WTC11 (cell line): ENCODE measurements at regions of chr15 and their contacts with region 1.

Region 1: DNA sequence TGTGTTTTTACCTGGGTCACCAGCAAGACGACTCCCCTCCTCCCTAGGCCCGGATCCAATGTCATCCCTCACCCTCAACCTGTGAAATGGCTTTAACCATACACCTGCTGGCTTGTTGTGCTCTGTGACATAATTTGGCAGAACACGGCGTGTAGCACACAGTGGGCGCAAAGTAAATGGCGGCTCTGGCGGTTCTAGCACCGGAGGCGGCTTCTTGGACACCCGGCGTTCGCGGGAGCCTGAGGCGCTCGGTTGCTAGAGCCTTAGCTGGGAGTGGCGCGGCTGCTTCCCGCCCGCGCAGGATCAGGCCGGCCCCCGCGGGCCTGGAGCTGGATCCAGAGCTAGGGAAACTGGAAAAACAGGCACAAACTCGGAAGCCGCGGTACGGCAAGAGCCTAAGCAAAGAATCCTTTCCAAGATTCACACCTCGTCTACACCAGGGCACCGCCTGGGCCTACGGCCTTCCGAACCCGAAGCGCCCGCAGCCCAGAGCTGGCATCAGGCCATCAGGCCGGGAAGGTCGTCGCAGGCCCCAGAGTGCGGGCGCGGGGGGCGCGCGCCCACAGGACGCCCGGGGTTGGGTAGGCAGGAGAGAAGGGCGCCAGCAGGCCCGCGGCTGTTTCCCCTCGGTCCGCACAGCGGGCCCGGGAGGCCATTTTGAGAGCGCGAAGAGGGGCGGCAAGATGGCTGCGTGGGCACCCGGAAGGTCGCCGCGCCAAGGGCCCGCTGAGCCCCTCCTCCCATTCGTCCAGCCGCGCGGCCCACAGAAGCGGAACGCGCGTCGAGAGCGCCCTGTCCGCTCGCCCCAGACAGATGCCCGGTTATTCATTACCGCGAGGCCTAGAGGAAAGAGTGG is 43.9 kb upstream of the POLG start:
- DNase-seq: no peak
- ATAC-seq: peak; percentile 45
- H3K4me3 Mint-ChIP-seq: peak overlapping the region; percentile 62
- H3K27ac Mint-ChIP-seq: no peak overlapping the region
- H3K4me1 Mint-ChIP-seq: peaks cover 46% of the 10 kb centered on the region
- H3K27me3 Mint-ChIP-seq: peaks cover 100% of the 10 kb centered on the region
- CTCF ChIP-seq: no peak

Region 2: DNA sequence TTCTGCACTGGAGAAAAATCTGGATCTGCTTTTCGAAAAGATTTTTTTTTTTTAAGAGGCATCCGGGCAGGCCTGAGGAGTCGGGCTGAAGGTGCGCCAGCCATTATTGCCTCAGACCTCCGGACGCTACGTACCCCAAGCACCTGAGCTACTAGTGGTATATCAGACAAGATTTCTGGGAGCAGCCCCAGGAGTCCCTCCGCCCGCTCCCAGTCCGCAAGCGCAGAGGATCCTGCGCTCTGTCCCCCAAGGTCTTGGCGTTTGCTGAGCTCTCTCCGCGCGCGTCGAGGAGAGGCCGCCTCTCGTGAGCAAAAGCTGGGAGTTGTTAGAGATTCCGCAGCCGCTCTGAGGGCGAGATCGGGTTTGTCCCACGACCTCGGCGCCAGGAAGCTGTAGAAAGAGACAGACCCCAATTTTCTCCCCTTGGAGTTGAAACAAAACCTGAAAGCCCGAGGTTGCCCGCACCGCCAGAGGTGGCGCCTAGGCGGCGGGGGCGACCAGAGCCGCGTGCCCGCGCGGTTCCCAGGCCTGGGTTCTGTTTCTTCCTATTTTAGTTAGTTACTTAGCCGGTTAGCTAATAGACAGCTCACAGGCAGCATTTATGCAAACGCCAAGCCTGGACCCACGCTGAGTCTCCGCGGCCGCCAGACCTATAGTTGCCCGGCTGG is 28.6 kb after region 1 on chr15:
- CTCF ChIA-PET with region 1: interaction called, 15 read pairs
- POLR2A ChIA-PET with region 1: no interaction called
- DNase-seq: peak; percentile 70
- ATAC-seq: peak; percentile 27
- H3K4me3 Mint-ChIP-seq: peak overlapping the region; percentile 67
- H3K27ac Mint-ChIP-seq: no peak overlapping the region
- H3K4me1 Mint-ChIP-seq: peaks cover 55% of the 10 kb centered on the region
- H3K27me3 Mint-ChIP-seq: peaks cover 100% of the 10 kb centered on the region
- CTCF ChIP-seq: no peak